Activated CD4-positive, alpha-beta memory T cell treated with anti-CD3 and anti-CD28 coated beads for 36 hours (primary cell): ENCODE measurements at regions of chr4 and their contacts with region 1.

Region 1: DNA sequence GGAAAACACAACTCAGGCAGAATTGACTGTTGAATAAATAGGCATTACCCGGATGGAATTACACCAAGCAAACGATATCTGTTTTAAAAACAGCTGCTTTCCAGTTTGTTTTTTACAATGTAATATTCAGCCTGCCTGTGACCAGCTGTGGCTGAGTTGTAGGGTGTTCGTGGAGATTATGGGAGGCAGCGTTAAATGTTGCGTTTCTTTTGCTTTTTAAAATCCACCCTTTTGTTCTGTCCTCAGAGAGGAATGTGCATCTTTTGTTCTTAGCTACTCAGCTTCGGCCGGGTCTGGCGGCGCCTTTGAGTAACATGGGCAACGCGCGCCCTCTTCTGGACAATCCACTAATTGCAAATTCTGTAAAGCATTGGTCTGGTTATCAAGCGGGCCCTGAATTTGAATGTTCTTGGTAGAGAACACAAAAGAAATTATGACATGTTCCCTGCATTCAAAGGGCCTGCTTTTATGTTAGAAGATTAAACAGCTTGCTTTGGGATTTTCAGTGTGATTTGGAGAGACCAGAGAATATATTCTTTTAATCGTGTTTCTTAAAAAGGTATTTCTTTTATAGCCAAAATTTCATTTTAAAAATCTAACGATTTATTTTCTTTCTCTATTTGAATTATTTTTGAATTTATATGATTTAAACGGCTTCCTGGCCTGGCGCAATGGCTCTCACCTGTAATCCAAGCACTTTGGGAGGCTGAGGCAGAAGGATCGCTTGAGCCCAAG is 76.3 kb upstream of the TRIM2 start:
- DNase-seq: peak; percentile 89
- H3K4me3 Mint-ChIP-seq: no peak overlapping the region
- H3K27ac Mint-ChIP-seq: no peak overlapping the region
- H3K4me1 Mint-ChIP-seq: peaks cover 5% of the 10 kb centered on the region
- H3K27me3 Mint-ChIP-seq: peaks cover 1% of the 10 kb centered on the region

Region 2: GRCh38 chr4:152843481-152844090 is 284.3 kb before region 1 on chr4:
- CTCF ChIA-PET with region 1: interaction called, 68 read pairs
- POLR2A ChIA-PET with region 1: no interaction called
- intact Hi-C with region 1: loop called (anchors 1 kb)
- DNase-seq: no peak
- H3K4me3 Mint-ChIP-seq: no peak overlapping the region
- H3K27ac Mint-ChIP-seq: no peak overlapping the region
- H3K4me1 Mint-ChIP-seq: peaks cover 16% of the 10 kb centered on the region
- H3K27me3 Mint-ChIP-seq: no peaks in the 10 kb centered on the region

Region 3: DNA sequence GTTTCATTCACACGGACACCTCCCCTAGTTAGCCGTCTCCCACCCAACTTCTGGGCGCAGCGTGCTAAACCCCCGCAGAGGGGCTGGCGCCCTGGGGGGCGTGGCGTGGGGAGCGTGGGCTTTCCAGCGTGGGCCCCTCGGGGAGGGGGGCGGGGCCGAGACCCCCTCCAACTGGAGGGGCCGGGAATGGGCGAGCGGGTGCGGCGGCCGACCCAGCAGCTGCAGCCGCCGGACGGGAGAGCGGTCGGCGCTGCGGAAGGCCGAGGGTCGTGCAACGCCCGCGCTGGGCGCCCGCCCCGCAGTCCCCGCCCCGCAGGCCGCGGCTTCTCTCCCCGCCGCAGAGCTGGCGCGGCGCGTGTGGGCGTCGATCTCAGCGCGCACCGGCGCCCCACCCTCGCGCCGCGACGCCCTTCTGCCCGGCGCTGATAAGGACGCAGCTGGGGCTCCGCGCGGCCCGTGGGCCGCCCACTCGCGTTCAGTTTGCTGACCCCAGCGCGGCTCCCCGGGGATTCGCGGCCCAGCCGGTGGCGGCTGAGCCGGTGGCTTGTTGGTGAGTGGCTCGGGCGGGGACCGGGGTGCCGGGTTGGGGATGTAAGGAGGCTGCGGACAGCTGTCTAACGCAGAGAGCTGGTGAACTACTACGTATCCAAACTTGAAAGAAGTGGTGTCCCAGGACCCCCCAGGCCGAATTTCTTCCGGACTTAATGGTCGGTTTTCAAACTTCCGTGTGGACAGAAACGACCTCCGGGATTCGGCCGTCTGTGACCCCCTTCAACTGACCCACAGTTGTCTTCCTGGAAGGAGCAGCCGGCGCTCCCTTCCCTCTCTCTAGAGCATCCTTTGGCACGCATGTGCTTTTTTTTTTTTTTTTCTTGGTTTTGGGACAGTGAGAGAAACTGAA is 190.3 kb before region 1 on chr4:
- CTCF ChIA-PET with region 1: interaction called, 7 read pairs
- POLR2A ChIA-PET with region 1: no interaction called
- intact Hi-C with region 1: loop called (anchors 5 kb)
- DNase-seq: peak; percentile 24
- H3K4me3 Mint-ChIP-seq: peak overlapping the region; percentile 64
- H3K27ac Mint-ChIP-seq: no peak overlapping the region
- H3K4me1 Mint-ChIP-seq: peaks cover 12% of the 10 kb centered on the region
- H3K27me3 Mint-ChIP-seq: peaks cover 51% of the 10 kb centered on the region

Region 4: GRCh38 chr4:153083447-153083947 is 44.4 kb before region 1 on chr4:
- CTCF ChIA-PET with region 1: interaction called, 500 read pairs
- POLR2A ChIA-PET with region 1: interaction called, 3 read pairs
- intact Hi-C with region 1: loop called (anchors 1 kb)
- DNase-seq: peak; percentile 59
- H3K4me3 Mint-ChIP-seq: no peak overlapping the region
- H3K27ac Mint-ChIP-seq: no peak overlapping the region
- H3K4me1 Mint-ChIP-seq: peaks cover 40% of the 10 kb centered on the region
- H3K27me3 Mint-ChIP-seq: no peaks in the 10 kb centered on the region

Region 5: GRCh38 chr4:153095448-153096204 is 32.3 kb before region 1 on chr4:
- CTCF ChIA-PET with region 1: interaction called, 28 read pairs
- POLR2A ChIA-PET with region 1: no interaction called
- intact Hi-C with region 1: no loop called
- DNase-seq: no peak
- H3K4me3 Mint-ChIP-seq: no peak overlapping the region
- H3K27ac Mint-ChIP-seq: no peak overlapping the region
- H3K4me1 Mint-ChIP-seq: peaks cover 4% of the 10 kb centered on the region
- H3K27me3 Mint-ChIP-seq: no peaks in the 10 kb centered on the region

Region 6: DNA sequence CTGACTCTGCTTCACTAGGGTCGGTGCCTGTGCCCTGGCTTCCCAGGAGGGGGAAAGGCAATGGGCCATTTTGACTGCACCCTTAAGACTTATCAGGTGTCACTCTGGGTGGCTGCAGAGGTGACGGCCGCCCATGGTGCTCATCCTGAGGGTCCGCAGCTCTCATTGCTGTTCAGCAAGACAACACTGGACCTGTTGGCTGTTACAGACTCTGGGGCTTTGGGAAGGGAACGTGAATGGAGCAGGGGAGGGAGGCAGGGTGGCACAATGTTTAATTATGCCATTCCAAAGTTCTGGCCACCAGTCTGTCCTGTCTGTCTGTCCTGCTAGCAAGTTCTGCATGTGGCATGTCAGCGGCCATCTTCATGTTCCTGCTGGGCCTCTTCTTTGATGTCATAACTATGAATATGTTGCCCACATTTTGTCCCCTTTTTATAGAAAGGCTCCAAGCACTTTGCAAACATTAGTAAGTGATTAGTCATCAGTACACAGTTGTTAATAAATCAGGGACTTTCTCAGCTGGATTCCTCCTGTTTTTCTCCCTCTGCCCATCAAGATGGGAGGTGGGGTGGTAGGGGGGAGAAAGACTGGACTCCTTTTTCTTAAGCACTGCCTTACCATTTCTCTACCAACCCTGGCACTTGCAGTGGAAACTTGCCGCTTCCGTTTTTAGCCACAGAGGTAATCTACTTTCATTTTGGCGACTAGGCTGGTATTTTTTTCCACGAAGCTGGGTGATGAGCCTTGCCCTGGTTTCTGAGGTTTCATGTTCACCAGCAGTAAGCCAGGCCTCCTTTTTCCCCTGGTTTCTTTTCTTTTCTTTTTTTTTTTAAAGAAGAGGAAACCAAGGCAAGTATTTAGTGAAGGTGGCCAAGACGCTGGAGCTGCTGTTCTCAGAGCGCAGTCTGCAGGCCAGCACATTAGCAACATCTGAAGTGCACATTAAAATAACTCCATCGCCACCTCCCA is 12.3 kb before region 1 on chr4:
- CTCF ChIA-PET with region 1: interaction called, 50 read pairs
- POLR2A ChIA-PET with region 1: interaction called, 10 read pairs
- intact Hi-C with region 1: no loop called
- DNase-seq: peak; percentile 89
- H3K4me3 Mint-ChIP-seq: no peak overlapping the region
- H3K27ac Mint-ChIP-seq: no peak overlapping the region
- H3K4me1 Mint-ChIP-seq: peaks cover 17% of the 10 kb centered on the region
- H3K27me3 Mint-ChIP-seq: no peaks in the 10 kb centered on the region